ENCODE measurements at regions of chr12 and their contacts with region 1.

Region 1: GRCh38 chr12:93677195-93678064 is at the start of gene CRADD:
- DNase-seq: peak; percentile 98
- ATAC-seq: peak; percentile 91
- H3K4me3 ChIP-seq: peak within 1 kb of the TSS; percentile 50 to 90 (median 86)
- H3K4me3 Mint-ChIP-seq: peak within 1 kb of the TSS; percentile 95
- H3K27ac ChIP-seq: peak within 1 kb of the TSS; percentile 95 to 99
- H3K27ac Mint-ChIP-seq: peak within 1 kb of the TSS; percentile 99
- H3K4me1 ChIP-seq: peaks cover 14 to 18% of the 10 kb centered on the region in 2 donors
- H3K4me1 Mint-ChIP-seq: peaks cover 31% of the 10 kb centered on the region
- H3K27me3 ChIP-seq: peaks cover 0 to 5% (median 0%) of the 10 kb centered on the region in 4 experiments
- H3K27me3 Mint-ChIP-seq: peaks cover 15% of the 10 kb centered on the region
- CTCF ChIP-seq: no peak
- total RNA-seq, gene CRADD: 15.1 and 15.6 TPM in 2 replicates

Region 2: GRCh38 chr12:92593734-92594402 is 1083.6 kb before region 1 on chr12:
- CTCF ChIA-PET with region 1: no interaction called
- POLR2A ChIA-PET with region 1: no interaction called
- intact Hi-C with region 1: loop called (anchors 5 kb)
- DNase-seq: peak; percentile 94
- ATAC-seq: peak; percentile 93
- H3K4me3 ChIP-seq: peak overlapping the region in 2 of 5 experiments; percentile 20 to 22
- H3K4me3 Mint-ChIP-seq: peak overlapping the region; percentile 69
- H3K27ac ChIP-seq: peak overlapping the region; percentile 86 to 97
- H3K27ac Mint-ChIP-seq: peak overlapping the region; percentile 94
- H3K4me1 ChIP-seq: peaks cover 21 to 25% of the 10 kb centered on the region in 2 donors
- H3K4me1 Mint-ChIP-seq: peaks cover 34% of the 10 kb centered on the region
- H3K27me3 ChIP-seq: no peaks in the 10 kb centered on the region
- H3K27me3 Mint-ChIP-seq: no peaks in the 10 kb centered on the region
- CTCF ChIP-seq: no peak

Region 3: GRCh38 chr12:92943482-92944250 is 733.8 kb before region 1 on chr12:
- CTCF ChIA-PET with region 1: no interaction called
- POLR2A ChIA-PET with region 1: no interaction called
- intact Hi-C with region 1: loop called (anchors 5 kb)
- DNase-seq: no peak
- ATAC-seq: no peak
- H3K4me3 ChIP-seq: no peak overlapping the region
- H3K4me3 Mint-ChIP-seq: no peak overlapping the region
- H3K27ac ChIP-seq: peak overlapping the region in 1 of 2 donors; percentile 9
- H3K27ac Mint-ChIP-seq: peak overlapping the region; percentile 61
- H3K4me1 ChIP-seq: peaks cover 15 to 32% of the 10 kb centered on the region in 2 donors
- H3K4me1 Mint-ChIP-seq: peaks cover 31% of the 10 kb centered on the region
- H3K27me3 ChIP-seq: no peaks in the 10 kb centered on the region
- H3K27me3 Mint-ChIP-seq: no peaks in the 10 kb centered on the region
- CTCF ChIP-seq: no peak

Region 4: GRCh38 chr12:93467351-93468007 is 210.0 kb before region 1 on chr12 and contains the start of gene MRPL42:
- CTCF ChIA-PET with region 1: no interaction called
- POLR2A ChIA-PET with region 1: no interaction called
- intact Hi-C with region 1: loop called (anchors 1 kb)
- DNase-seq: peak; percentile 95
- ATAC-seq: peak; percentile 93
- H3K4me3 ChIP-seq: peak within 1 kb of the TSS; percentile 64 to 82 (median 78)
- H3K4me3 Mint-ChIP-seq: peak within 1 kb of the TSS; percentile 95
- H3K27ac ChIP-seq: peak within 1 kb of the TSS; percentile 60 to 80
- H3K27ac Mint-ChIP-seq: peak within 1 kb of the TSS; percentile 95
- H3K4me1 ChIP-seq: peaks cover 12 to 17% of the 10 kb centered on the region in 2 donors
- H3K4me1 Mint-ChIP-seq: peaks cover 28% of the 10 kb centered on the region
- H3K27me3 ChIP-seq: no peaks in the 10 kb centered on the region
- H3K27me3 Mint-ChIP-seq: no peaks in the 10 kb centered on the region
- CTCF ChIP-seq: peak; percentile 83
- total RNA-seq, gene MRPL42: 41.9 and 45.2 TPM in 2 replicates

Region 5: GRCh38 chr12:93624595-93625294 is 52.7 kb before region 1 on chr12:
- CTCF ChIA-PET with region 1: no interaction called
- POLR2A ChIA-PET with region 1: no interaction called
- intact Hi-C with region 1: no loop called
- DNase-seq: no peak
- ATAC-seq: no peak
- H3K4me3 ChIP-seq: no peak overlapping the region
- H3K4me3 Mint-ChIP-seq: no peak overlapping the region
- H3K27ac ChIP-seq: no peak overlapping the region
- H3K27ac Mint-ChIP-seq: no peak overlapping the region
- H3K4me1 ChIP-seq: no peaks in the 10 kb centered on the region
- H3K4me1 Mint-ChIP-seq: peaks cover 3% of the 10 kb centered on the region
- H3K27me3 ChIP-seq: no peaks in the 10 kb centered on the region
- H3K27me3 Mint-ChIP-seq: no peaks in the 10 kb centered on the region
- CTCF ChIP-seq: no peak

Region 6: DNA sequence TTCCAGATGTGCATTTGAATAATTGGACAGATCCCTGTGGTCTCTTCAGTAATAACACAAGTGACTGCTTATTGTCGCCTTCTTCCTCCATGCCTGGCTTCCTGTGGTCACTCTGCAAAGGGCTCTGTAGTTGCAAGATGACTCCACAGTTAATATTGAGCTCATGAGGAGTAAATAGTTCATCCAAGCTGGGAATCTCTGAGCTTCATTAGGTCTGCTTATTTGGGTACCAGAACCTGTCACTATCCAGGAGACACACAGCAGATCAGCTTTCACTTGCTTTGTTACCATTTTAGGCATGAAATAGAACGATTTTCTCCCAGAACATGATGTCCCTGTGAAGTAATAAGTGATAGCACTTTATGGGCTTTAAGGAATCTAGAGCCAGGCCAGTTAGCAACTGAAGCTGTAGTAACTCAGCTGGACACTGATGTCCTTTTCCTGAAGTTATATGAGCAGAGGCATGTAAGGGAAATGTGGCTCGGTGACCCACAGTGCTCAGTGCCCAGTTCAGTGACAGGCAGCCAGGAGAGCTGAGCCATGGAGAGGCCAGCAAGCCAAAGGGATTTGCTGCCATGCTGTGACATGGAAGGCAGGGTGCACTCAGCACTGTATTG is 49.9 kb after region 1 on chr12:
- CTCF ChIA-PET with region 1: no interaction called
- POLR2A ChIA-PET with region 1: no interaction called
- intact Hi-C with region 1: no loop called
- DNase-seq: no peak
- ATAC-seq: no peak
- H3K4me3 ChIP-seq: no peak overlapping the region
- H3K4me3 Mint-ChIP-seq: no peak overlapping the region
- H3K27ac ChIP-seq: no peak overlapping the region
- H3K27ac Mint-ChIP-seq: no peak overlapping the region
- H3K4me1 ChIP-seq: no peaks in the 10 kb centered on the region
- H3K4me1 Mint-ChIP-seq: peaks cover 9% of the 10 kb centered on the region
- H3K27me3 ChIP-seq: no peaks in the 10 kb centered on the region
- H3K27me3 Mint-ChIP-seq: no peaks in the 10 kb centered on the region
- CTCF ChIP-seq: no peak

Region 7: DNA sequence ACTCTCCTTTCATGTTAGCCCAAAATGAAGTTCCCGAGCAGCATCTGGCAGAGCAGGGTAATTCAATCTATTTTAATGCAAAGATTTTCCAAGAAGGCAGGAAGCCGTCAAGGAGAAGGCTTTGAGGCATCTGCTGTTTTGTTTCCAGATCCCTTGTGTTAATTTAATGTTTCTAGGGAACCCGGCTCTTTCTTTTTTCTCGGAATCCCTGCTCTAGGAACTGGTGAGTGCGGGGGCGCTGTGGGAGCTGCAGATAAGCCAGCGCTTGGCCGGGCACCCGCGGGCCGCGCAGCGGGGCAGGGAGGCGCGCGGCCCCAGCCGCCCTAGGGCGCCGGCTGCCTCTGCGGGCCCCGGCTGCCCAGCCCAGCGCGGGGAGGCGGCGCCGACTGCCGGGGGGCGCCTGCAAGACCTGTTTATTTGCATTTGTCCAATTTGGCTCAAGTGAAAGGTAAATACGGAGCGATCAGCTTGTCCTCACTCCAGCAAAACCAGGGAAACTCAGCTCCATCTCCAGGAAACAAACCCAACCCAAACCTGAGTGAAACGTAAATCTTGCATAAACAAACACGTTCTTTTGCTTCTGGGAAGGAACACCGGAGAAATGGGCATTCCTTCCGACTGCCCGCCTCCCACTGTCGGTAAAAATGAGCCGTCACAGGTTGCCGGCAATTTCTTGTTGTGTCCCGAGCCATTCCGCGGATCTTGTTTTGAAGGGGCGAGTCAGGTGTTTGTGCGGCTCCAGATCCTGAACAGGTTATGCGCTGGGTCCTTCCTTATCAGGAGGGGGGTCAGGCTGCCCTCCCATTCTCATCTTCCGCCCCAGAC is 64.9 kb after region 1 on chr12:
- CTCF ChIA-PET with region 1: interaction called, 7 read pairs
- POLR2A ChIA-PET with region 1: no interaction called
- intact Hi-C with region 1: loop called (anchors 2 kb)
- DNase-seq: peak; percentile 73
- ATAC-seq: peak; percentile 94
- H3K4me3 ChIP-seq: peak overlapping the region; percentile 59 to 93 (median 86)
- H3K4me3 Mint-ChIP-seq: peak overlapping the region; percentile 92
- H3K27ac ChIP-seq: peak overlapping the region; percentile 48 to 68
- H3K27ac Mint-ChIP-seq: peak overlapping the region; percentile 78
- H3K4me1 ChIP-seq: peaks cover 8 to 15% of the 10 kb centered on the region in 2 donors
- H3K4me1 Mint-ChIP-seq: peaks cover 29% of the 10 kb centered on the region
- H3K27me3 ChIP-seq: no peaks in the 10 kb centered on the region
- H3K27me3 Mint-ChIP-seq: no peaks in the 10 kb centered on the region
- CTCF ChIP-seq: peak; percentile 26

Region 8: GRCh38 chr12:93847517-93848474 is 170.4 kb after region 1 on chr12:
- CTCF ChIA-PET with region 1: no interaction called
- POLR2A ChIA-PET with region 1: no interaction called
- intact Hi-C with region 1: loop called (anchors 5 kb)
- DNase-seq: peak; percentile 59
- ATAC-seq: peak; percentile 65
- H3K4me3 ChIP-seq: no peak overlapping the region
- H3K4me3 Mint-ChIP-seq: peak overlapping the region; percentile 64
- H3K27ac ChIP-seq: no peak overlapping the region
- H3K27ac Mint-ChIP-seq: peak overlapping the region; percentile 65
- H3K4me1 ChIP-seq: peaks cover 14 to 17% of the 10 kb centered on the region in 2 donors
- H3K4me1 Mint-ChIP-seq: peaks cover 22% of the 10 kb centered on the region
- H3K27me3 ChIP-seq: no peaks in the 10 kb centered on the region
- H3K27me3 Mint-ChIP-seq: no peaks in the 10 kb centered on the region
- CTCF ChIP-seq: no peak

Region 9: DNA sequence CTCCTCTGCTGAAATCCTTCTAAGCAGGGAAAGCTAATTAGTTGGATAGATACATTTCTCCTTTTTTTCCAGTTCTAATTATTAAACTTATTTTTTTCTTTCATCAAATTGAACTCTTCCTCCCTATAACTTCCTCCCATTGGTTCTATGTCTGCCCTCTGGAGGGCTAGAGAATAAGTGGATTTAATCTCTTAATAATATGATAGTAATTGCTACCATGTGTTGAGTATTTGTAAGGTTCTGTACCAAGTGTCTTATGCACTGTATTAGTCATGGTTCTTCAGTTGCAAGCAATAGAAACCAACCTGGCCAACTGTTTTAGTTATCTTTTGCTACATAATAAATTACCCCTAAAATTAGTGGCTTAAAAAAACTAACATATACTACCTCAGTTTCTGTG is 280.4 kb after region 1 on chr12:
- CTCF ChIA-PET with region 1: no interaction called
- POLR2A ChIA-PET with region 1: no interaction called
- intact Hi-C with region 1: no loop called
- DNase-seq: no peak
- ATAC-seq: no peak
- H3K4me3 ChIP-seq: no peak overlapping the region
- H3K4me3 Mint-ChIP-seq: no peak overlapping the region
- H3K27ac ChIP-seq: no peak overlapping the region
- H3K27ac Mint-ChIP-seq: no peak overlapping the region
- H3K4me1 ChIP-seq: no peaks in the 10 kb centered on the region
- H3K4me1 Mint-ChIP-seq: no peaks in the 10 kb centered on the region
- H3K27me3 ChIP-seq: peaks cover 0 to 3% (median 0%) of the 10 kb centered on the region in 4 experiments
- H3K27me3 Mint-ChIP-seq: peaks cover 9% of the 10 kb centered on the region
- CTCF ChIP-seq: no peak

Region 10: GRCh38 chr12:95548539-95549391 is 1871.3 kb after region 1 on chr12:
- CTCF ChIA-PET with region 1: no interaction called
- POLR2A ChIA-PET with region 1: no interaction called
- intact Hi-C with region 1: loop called (anchors 5 kb)
- DNase-seq: peak; percentile 87
- ATAC-seq: peak; percentile 91
- H3K4me3 ChIP-seq: peak overlapping the region; percentile 52 to 91 (median 81)
- H3K4me3 Mint-ChIP-seq: peak overlapping the region; percentile 92
- H3K27ac ChIP-seq: peak overlapping the region; percentile 73 to 78
- H3K27ac Mint-ChIP-seq: peak overlapping the region; percentile 85
- H3K4me1 ChIP-seq: peaks cover 12 to 13% of the 10 kb centered on the region in 2 donors
- H3K4me1 Mint-ChIP-seq: peaks cover 25% of the 10 kb centered on the region
- H3K27me3 ChIP-seq: peaks cover 0 to 7% (median 0%) of the 10 kb centered on the region in 4 experiments
- H3K27me3 Mint-ChIP-seq: peaks cover 6% of the 10 kb centered on the region
- CTCF ChIP-seq: no peak

Measured in B cell (primary cell).